Activated T-helper 2 cell treated with anti-CD3 and anti-CD28 coated beads, Interferon-gamma antibody, Interleukin-2, Interleukin-4, amounts not matched to agents 10 μg/mL and 5 μg/mL and 100 μg/mL, durations not matched to agents 14 hours and 24 hours and 36 hours (primary cell): ENCODE measurements at regions of chr21 and their contacts with region 1.

Region 1: DNA sequence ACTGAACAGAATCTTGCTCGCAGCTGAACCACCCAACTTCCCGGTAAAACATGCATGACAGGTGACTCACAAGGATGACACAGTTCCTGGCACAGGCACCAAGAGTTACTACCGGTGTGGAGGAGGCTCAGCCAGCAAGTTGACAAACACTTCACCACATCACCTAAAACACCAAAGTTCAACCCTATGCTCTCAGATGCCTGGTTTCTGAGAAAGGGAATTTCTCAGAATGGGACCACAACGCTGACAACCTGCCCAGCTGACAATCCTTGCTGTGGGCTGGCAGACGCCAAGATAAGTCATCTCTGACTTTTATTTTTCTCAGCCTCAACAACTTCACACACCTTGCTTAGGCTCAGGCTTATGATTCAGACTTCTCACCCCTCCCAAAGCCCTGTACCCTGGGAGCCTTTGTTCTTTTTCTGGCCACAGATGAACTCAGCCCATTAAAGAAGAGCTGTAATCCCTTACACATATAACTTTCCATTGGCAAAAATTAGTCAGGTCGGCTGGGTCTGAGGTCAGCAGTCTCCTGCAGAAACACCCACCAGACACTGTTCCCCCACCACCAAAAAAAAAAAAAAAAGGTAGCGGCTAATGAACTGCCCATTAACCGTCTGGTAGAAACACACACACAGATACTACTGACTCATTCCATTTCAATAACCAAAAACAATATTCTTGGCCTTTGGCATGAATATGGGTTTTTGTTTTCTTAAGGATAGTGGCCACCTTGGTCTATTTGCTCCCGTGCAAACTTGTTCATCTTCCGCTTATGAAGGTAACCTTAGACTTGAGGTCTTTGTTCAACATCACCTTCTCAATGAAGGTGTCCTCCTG is 10.8 kb upstream of the TIAM1 start:
- DNase-seq: peak; percentile 78
- H3K4me3 Mint-ChIP-seq: peak overlapping the region; percentile 20
- H3K27ac Mint-ChIP-seq: peak overlapping the region; percentile 66
- H3K4me1 Mint-ChIP-seq: peaks cover 40% of the 10 kb centered on the region
- H3K27me3 Mint-ChIP-seq: no peaks in the 10 kb centered on the region

Region 2: DNA sequence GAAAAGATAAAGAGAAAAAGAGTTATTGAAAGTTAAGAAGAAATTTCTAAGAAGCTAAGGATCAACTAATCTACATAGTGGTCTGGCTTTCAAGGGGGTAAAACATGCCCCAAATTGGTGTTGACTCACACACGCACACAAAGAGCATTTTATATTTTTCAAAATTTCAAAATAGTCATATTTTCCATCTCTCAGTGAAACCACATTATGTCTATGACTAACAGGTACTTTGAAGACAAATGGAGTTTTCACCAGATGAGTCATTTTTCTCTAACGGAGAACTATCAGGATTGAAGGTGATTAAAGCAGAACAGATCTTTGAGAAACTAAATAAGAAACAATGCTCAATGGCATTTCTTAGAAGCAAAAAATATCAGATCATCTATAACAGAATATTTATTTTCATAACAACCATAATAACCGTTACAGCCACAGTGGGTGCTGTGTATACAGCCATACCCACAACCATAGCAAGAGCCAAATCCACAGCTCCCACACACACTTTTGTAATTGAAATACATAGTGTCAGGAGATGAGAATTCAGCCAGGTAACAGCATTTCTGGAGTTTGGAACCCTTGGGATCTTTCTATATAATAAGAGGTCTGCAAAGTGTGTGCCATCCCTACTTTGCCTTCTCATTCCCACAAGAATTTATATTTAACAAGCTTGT is 636.5 kb before region 1 on chr21 and contains the start of gene KRTAP21-3:
- intact Hi-C with region 1: loop called (anchors 2 kb)
- DNase-seq: no peak
- H3K4me3 Mint-ChIP-seq: no peak within 1 kb of the TSS
- H3K27ac Mint-ChIP-seq: peak within 1 kb of the TSS; percentile 86
- H3K4me1 Mint-ChIP-seq: peaks cover 36% of the 10 kb centered on the region
- H3K27me3 Mint-ChIP-seq: no peaks in the 10 kb centered on the region
- total RNA-seq, gene KRTAP21-3: not detected in 2 replicates

Region 3: GRCh38 chr21:31132574-31133242 is 222.1 kb before region 1 on chr21:
- intact Hi-C with region 1: loop called (anchors 2 kb)
- DNase-seq: peak; percentile 69
- H3K4me3 Mint-ChIP-seq: peak overlapping the region; percentile 70
- H3K27ac Mint-ChIP-seq: peak overlapping the region; percentile 98
- H3K4me1 Mint-ChIP-seq: peaks cover 72% of the 10 kb centered on the region
- H3K27me3 Mint-ChIP-seq: no peaks in the 10 kb centered on the region

Region 4: GRCh38 chr21:31198575-31198974 is 156.2 kb before region 1 on chr21:
- intact Hi-C with region 1: loop called (anchors 2 kb)
- DNase-seq: no peak
- H3K4me3 Mint-ChIP-seq: no peak overlapping the region
- H3K27ac Mint-ChIP-seq: no peak overlapping the region
- H3K4me1 Mint-ChIP-seq: peaks cover 39% of the 10 kb centered on the region
- H3K27me3 Mint-ChIP-seq: no peaks in the 10 kb centered on the region

Region 5: DNA sequence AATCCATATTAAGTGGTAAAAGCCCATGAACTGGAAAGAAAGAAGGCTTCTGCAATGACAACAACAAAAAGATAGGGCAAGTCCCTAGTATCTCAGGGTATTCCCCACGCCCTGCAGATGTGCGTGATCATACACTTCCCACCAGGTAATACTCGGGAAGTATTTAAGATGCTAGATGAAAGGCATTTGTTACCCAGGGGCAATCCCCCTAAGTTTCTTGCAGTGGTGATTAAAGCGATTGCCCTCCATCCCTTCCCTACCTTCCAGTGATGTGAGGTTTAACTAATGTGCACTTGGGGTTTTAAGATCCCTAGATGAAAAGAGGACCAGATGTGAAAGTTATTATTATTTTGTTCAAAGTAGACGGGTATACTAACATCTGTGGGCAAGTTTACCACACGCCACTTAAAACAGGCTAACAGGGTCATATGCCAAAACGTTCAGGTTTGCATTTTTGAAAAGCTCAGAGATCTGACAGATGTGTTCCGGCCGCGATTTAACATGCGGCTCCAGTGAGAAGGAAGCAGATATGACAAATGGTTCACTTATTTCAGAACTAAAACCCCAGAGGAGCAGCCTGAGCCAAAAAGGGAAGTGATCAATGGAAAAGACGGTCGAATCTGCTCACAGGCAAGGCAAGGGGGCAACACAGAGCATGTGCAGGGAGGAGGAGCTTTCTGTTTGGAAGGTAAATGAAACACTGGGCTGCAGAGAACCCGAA is 28.1 kb before region 1 on chr21:
- intact Hi-C with region 1: loop called (anchors 1 kb)
- DNase-seq: peak; percentile 16
- H3K4me3 Mint-ChIP-seq: peak overlapping the region; percentile 24
- H3K27ac Mint-ChIP-seq: peak overlapping the region; percentile 67
- H3K4me1 Mint-ChIP-seq: peaks cover 19% of the 10 kb centered on the region
- H3K27me3 Mint-ChIP-seq: no peaks in the 10 kb centered on the region

Region 6: GRCh38 chr21:31397515-31397926 is 42.7 kb after region 1 on chr21:
- intact Hi-C with region 1: loop called (anchors 2 kb)
- DNase-seq: no peak
- H3K4me3 Mint-ChIP-seq: no peak overlapping the region
- H3K27ac Mint-ChIP-seq: no peak overlapping the region
- H3K4me1 Mint-ChIP-seq: peaks cover 34% of the 10 kb centered on the region
- H3K27me3 Mint-ChIP-seq: no peaks in the 10 kb centered on the region

Region 7: GRCh38 chr21:31558962-31559367 is 204.1 kb after region 1 on chr21:
- intact Hi-C with region 1: loop called (anchors 2 kb)
- DNase-seq: peak; percentile 92
- H3K4me3 Mint-ChIP-seq: peak overlapping the region; percentile 81
- H3K27ac Mint-ChIP-seq: no peak overlapping the region
- H3K4me1 Mint-ChIP-seq: peaks cover 34% of the 10 kb centered on the region
- H3K27me3 Mint-ChIP-seq: peaks cover 40% of the 10 kb centered on the region